Natural killer cell (primary cell): ENCODE measurements at regions of chr20 and their contacts with region 1.

Region 1: GRCh38 chr20:50323777-50324775 is 133.4 kb downstream of the CEBPB start:
- DNase-seq: no peak
- ATAC-seq: no peak
- H3K4me3 ChIP-seq: no peak overlapping the region
- H3K4me3 Mint-ChIP-seq: no peak overlapping the region
- H3K27ac ChIP-seq: no peak overlapping the region
- H3K27ac Mint-ChIP-seq: no peak overlapping the region
- H3K4me1 ChIP-seq: no peaks in the 10 kb centered on the region
- H3K4me1 Mint-ChIP-seq: peaks cover 0 to 11% of the 10 kb centered on the region in 2 donors
- H3K27me3 ChIP-seq: no peaks in the 10 kb centered on the region
- H3K27me3 Mint-ChIP-seq: peaks cover 28 to 44% of the 10 kb centered on the region in 2 donors
- CTCF ChIP-seq: no peak

Region 2: DNA sequence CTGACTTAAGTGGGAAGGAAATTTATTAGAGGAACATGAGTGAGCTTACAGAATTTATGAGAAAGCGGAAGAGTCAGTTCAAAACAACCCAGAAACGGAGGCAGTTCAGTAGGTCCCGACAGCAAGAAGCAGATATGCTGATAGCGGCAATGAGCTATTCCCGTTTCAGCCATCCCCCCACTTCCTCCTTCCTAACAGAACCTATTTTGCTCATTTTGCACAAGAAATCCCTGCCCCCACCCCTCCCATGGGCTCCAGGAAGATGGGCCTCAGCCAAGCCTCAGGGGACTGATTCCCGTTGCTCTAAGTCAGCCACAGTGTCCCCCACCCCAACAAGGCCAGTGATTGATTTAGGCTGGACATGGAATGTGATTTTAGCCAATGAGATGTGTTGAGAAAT is 24.0 kb after region 1 on chr20:
- intact Hi-C with region 1: loop called (anchors 2 kb)
- DNase-seq: no peak
- ATAC-seq: no peak
- H3K4me3 ChIP-seq: no peak overlapping the region
- H3K4me3 Mint-ChIP-seq: no peak overlapping the region
- H3K27ac ChIP-seq: no peak overlapping the region
- H3K27ac Mint-ChIP-seq: peak overlapping the region in 1 of 2 donors; percentile 8
- H3K4me1 ChIP-seq: peaks cover 44% of the 10 kb centered on the region
- H3K4me1 Mint-ChIP-seq: peaks cover 32 to 48% of the 10 kb centered on the region in 2 donors
- H3K27me3 ChIP-seq: peaks cover 41% of the 10 kb centered on the region
- H3K27me3 Mint-ChIP-seq: peaks cover 23 to 54% of the 10 kb centered on the region in 2 donors
- CTCF ChIP-seq: no peak

Region 3: GRCh38 chr20:51595058-51595532 is 1271.0 kb after region 1 on chr20:
- intact Hi-C with region 1: no loop called
- DNase-seq: peak; percentile 62 to 87
- ATAC-seq: peak; percentile 87 to 99 (median 99)
- H3K4me3 ChIP-seq: no peak overlapping the region
- H3K4me3 Mint-ChIP-seq: peak overlapping the region; percentile 65
- H3K27ac ChIP-seq: no peak overlapping the region
- H3K27ac Mint-ChIP-seq: peak overlapping the region; percentile 45 to 69
- H3K4me1 ChIP-seq: peaks cover 7% of the 10 kb centered on the region
- H3K4me1 Mint-ChIP-seq: peaks cover 9 to 21% of the 10 kb centered on the region in 2 donors
- H3K27me3 ChIP-seq: no peaks in the 10 kb centered on the region
- H3K27me3 Mint-ChIP-seq: no peaks in the 10 kb centered on the region
- CTCF ChIP-seq: peak; percentile 88